ENCODE measurements at regions of chr17 and their contacts with region 1.

Region 1: GRCh38 chr17:59786536-59787319 is 79.3 kb downstream of the VMP1 start:
- DNase-seq: peak; percentile 85
- H3K4me3 Mint-ChIP-seq: peak overlapping the region; percentile 64
- H3K27ac Mint-ChIP-seq: peak overlapping the region; percentile 99
- H3K4me1 Mint-ChIP-seq: peaks cover 58% of the 10 kb centered on the region
- H3K27me3 Mint-ChIP-seq: no peaks in the 10 kb centered on the region

Region 2: DNA sequence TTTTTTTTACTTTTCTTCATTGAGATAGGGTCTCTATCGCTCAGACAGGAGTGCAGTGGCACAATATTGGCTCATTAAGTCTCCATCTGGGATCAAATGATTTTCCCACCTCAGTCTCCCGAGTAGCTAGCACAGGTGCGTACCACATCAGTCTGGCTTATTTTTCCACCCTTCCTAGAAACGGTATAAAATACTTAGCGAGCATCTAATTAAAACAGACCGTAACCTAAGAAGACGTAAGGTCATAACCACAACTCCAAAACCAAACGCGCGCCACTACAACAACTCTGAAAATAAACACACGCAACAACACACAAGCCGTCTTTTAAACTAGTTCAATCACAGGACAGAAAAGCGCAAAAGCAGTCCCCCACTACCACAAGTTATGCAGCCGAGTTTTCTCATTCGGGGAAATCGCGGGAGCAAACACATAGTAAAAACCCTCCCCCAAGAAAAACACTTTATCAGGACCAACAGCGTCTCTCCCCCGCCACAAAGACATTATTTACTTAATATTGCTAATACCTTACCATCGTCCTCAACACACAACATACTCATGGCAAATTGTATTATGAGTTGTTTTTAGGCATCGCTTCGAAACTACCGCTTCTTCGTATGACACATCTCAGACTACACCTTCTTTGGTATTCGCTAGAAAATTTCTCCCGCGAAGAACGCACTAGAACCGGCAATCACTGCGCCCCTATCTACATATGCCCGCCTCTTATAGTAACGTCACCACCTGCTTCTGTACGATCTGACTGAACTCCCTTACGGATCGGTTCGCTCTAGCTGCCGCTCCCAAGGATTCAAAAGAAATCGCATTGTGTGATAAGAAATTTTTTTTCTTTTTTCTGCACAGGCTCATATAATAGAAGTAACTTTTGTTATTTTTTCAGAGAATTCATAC is 1127.7 kb before region 1 on chr17:
- intact Hi-C with region 1: loop called (anchors 5 kb)
- DNase-seq: peak; percentile 73
- H3K4me3 Mint-ChIP-seq: peak overlapping the region; percentile 74
- H3K27ac Mint-ChIP-seq: peak overlapping the region; percentile 93
- H3K4me1 Mint-ChIP-seq: peaks cover 14% of the 10 kb centered on the region
- H3K27me3 Mint-ChIP-seq: peaks cover 8% of the 10 kb centered on the region

Region 3: DNA sequence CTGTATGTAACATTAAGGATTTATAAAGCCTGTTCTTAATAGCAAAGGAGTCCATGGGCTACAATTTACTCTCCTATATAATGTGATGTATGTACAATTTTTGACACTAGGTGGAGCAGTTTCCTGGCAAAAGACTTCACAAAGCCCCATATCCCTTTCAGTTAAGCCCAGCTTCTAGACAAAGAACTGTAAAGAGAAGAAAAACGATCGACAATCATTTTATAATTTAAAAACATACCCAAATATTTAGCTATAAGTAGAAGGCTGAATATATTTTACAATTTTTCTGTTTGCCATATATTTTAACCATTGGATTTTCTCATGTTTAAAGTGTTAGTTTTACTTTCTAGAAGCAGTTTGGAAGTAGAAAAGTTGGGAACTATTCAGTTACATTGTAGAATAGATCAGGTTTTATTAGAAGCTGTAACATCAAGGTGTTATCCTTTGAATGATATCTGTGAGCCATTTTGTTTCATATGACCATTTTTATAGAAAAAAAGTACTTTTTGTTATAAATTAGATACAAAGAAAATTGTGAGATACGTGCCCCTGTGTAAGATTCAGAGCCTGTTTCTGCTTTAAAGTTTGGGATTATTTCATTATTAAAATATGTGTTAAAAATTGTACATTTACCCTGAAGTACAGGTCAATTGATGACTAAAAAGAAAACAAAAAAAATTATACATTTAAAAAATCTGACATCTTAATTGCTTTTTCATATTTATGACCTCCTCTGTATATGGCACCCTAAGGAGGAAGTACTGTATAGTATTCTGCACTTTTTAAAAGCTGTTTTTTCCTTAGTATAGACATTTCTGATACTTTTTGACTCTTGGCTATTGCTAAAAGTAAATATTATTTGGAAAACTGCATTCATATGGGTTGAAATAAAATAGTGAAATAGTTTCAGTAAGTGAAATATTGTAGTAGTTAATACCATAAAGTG is 32.9 kb before region 1 on chr17:
- intact Hi-C with region 1: loop called (anchors 1 kb)
- DNase-seq: no peak
- H3K4me3 Mint-ChIP-seq: peak overlapping the region; percentile 68
- H3K27ac Mint-ChIP-seq: peak overlapping the region; percentile 85
- H3K4me1 Mint-ChIP-seq: peaks cover 53% of the 10 kb centered on the region
- H3K27me3 Mint-ChIP-seq: no peaks in the 10 kb centered on the region

Region 4: GRCh38 chr17:59769891-59770290 is 16.8 kb before region 1 on chr17:
- intact Hi-C with region 1: no loop called
- DNase-seq: no peak
- H3K4me3 Mint-ChIP-seq: no peak overlapping the region
- H3K27ac Mint-ChIP-seq: peak overlapping the region; percentile 55
- H3K4me1 Mint-ChIP-seq: peaks cover 22% of the 10 kb centered on the region
- H3K27me3 Mint-ChIP-seq: no peaks in the 10 kb centered on the region

Region 5: DNA sequence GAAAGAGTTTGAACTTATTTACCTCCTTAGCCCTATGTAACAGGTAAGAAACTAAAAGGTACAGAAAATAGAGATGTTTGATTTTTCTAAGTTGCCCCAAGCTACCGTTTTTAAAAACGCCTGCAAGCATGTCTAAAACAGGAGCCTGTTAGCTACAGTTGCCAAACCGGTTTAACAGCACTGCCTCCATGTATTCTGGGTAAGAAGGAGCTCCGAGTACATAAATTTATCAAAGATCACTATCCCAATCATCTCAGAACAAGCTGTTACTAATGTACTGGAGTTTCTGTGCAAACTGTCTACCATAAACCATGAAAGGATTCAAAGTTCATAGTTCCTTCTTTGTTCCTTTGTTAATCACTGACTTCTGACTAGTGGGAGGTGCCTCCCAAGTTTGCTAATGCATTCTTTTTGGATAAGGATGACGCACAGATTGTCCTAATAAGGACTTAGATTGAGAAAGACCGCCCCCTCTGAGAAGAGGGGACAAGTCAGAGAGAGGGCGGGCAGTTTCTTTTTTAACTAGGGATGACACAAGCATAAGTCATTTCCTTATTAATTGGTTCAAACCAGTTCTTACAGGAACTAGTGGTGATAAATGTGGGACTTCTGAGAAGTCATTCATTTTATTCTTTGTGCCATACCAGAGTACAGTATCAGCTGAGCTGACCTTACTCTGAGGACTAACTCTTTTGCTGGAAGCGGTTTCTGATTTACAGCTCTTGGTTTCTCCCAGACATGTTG is 50.8 kb after region 1 on chr17:
- intact Hi-C with region 1: loop called (anchors 1 kb)
- DNase-seq: peak; percentile 77
- H3K4me3 Mint-ChIP-seq: peak overlapping the region; percentile 98
- H3K27ac Mint-ChIP-seq: peak overlapping the region; percentile 99
- H3K4me1 Mint-ChIP-seq: peaks cover 31% of the 10 kb centered on the region
- H3K27me3 Mint-ChIP-seq: peaks cover 4% of the 10 kb centered on the region

Region 6: DNA sequence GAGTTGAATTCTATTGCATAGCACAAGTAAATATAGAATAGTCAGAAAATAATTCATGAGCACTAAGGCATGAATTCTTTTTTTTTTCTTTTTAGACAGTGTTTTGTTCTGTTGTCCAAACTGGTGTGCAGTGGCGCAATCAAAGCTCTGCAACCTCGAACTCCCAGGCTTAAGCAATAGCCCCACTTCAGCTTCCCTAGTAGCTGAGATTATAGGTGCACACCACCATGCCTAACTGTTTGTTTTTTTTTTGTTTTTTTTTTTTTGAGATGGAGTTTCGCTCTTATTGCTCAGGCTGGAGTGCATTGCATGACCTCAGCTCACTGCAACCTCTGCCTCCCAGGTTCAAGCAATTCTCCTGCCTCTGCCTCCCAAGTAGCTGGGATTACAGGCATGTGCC is 89.4 kb after region 1 on chr17:
- intact Hi-C with region 1: no loop called
- DNase-seq: no peak
- H3K4me3 Mint-ChIP-seq: no peak overlapping the region
- H3K27ac Mint-ChIP-seq: no peak overlapping the region
- H3K4me1 Mint-ChIP-seq: no peaks in the 10 kb centered on the region
- H3K27me3 Mint-ChIP-seq: no peaks in the 10 kb centered on the region